CD4-positive, alpha-beta memory T cell (primary cell): ENCODE measurements at regions of chr7 and their contacts with region 1.

Region 1: GRCh38 chr7:44633254-44634186 is 27.1 kb downstream of the OGDH start:
- DNase-seq: peak; percentile 76 to 93 (median 85)
- H3K4me3 ChIP-seq: peak overlapping the region in 1 of 2 donors; percentile 30
- H3K4me3 Mint-ChIP-seq: peak overlapping the region; percentile 21 to 88 (median 75)
- H3K27ac ChIP-seq: peak overlapping the region; percentile 96
- H3K27ac Mint-ChIP-seq: peak overlapping the region; percentile 97 to 100 (median 100)
- H3K4me1 ChIP-seq: peaks cover 100% of the 10 kb centered on the region
- H3K4me1 Mint-ChIP-seq: peaks cover 66 to 98% (median 88%) of the 10 kb centered on the region in 4 donors
- H3K27me3 ChIP-seq: no peaks in the 10 kb centered on the region
- H3K27me3 Mint-ChIP-seq: no peaks in the 10 kb centered on the region

Region 2: GRCh38 chr7:44573464-44574286 is 59.8 kb before region 1 on chr7 and contains the start of gene DDX56:
- CTCF ChIA-PET with region 1: interaction called, 4 read pairs
- POLR2A ChIA-PET with region 1: interaction called, 24 read pairs
- intact Hi-C with region 1: no loop called
- DNase-seq: peak; percentile 87 to 93 (median 88)
- H3K4me3 ChIP-seq: peak within 1 kb of the TSS; percentile 93
- H3K4me3 Mint-ChIP-seq: peak within 1 kb of the TSS; percentile 94 to 99 (median 96)
- H3K27ac ChIP-seq: peak within 1 kb of the TSS; percentile 94
- H3K27ac Mint-ChIP-seq: peak within 1 kb of the TSS; percentile 97 to 99 (median 99)
- H3K4me1 ChIP-seq: peaks cover 30% of the 10 kb centered on the region
- H3K4me1 Mint-ChIP-seq: peaks cover 26 to 41% (median 34%) of the 10 kb centered on the region in 4 donors
- H3K27me3 ChIP-seq: no peaks in the 10 kb centered on the region
- H3K27me3 Mint-ChIP-seq: no peaks in the 10 kb centered on the region
- total RNA-seq, gene DDX56: 109 to 114 TPM

Region 3: DNA sequence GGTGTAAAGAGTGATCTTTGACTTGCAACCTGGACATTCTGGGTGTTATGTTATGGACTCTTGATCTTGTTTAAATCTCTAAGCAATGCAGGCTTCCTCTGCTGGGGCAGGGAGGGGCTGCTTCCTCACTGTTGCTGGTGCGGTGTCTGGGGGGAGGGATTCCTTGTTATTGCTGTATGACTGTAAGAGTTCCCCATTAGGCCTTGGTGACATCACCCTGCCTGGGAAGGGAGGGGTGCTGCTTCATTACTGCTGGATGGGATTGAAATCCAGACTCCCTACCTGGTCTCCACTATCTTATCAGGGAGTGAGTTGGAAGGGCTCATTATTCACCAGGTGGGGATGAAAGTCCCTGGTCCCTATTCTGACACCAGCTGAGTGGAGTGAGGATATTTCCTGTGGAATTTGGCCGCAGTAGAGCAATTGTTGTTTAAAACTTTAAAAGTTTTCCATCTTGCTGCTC is 18.3 kb before region 1 on chr7:
- CTCF ChIA-PET with region 1: interaction called, 48 read pairs
- POLR2A ChIA-PET with region 1: interaction called, 1,226 read pairs
- intact Hi-C with region 1: loop called (anchors 1 kb)
- DNase-seq: peak in 3 of 5 donors; percentile 38 to 72 (median 44)
- H3K4me3 ChIP-seq: no peak overlapping the region
- H3K4me3 Mint-ChIP-seq: peak overlapping the region; percentile 63 to 86 (median 72)
- H3K27ac ChIP-seq: peak overlapping the region; percentile 48
- H3K27ac Mint-ChIP-seq: peak overlapping the region; percentile 75 to 95 (median 93)
- H3K4me1 ChIP-seq: peaks cover 70% of the 10 kb centered on the region
- H3K4me1 Mint-ChIP-seq: peaks cover 52 to 79% (median 64%) of the 10 kb centered on the region in 4 donors
- H3K27me3 ChIP-seq: no peaks in the 10 kb centered on the region
- H3K27me3 Mint-ChIP-seq: no peaks in the 10 kb centered on the region

Region 4: GRCh38 chr7:44622307-44623151 is 11.0 kb before region 1 on chr7:
- CTCF ChIA-PET with region 1: interaction called, 44 read pairs
- POLR2A ChIA-PET with region 1: interaction called, 1,226 read pairs
- intact Hi-C with region 1: loop called (anchors 1 kb)
- DNase-seq: peak in 3 of 5 donors; percentile 35 to 60 (median 36)
- H3K4me3 ChIP-seq: peak overlapping the region in 1 of 2 donors; percentile 58
- H3K4me3 Mint-ChIP-seq: peak overlapping the region; percentile 57 to 95 (median 82)
- H3K27ac ChIP-seq: peak overlapping the region; percentile 74
- H3K27ac Mint-ChIP-seq: peak overlapping the region; percentile 91 to 99 (median 96)
- H3K4me1 ChIP-seq: peaks cover 98% of the 10 kb centered on the region
- H3K4me1 Mint-ChIP-seq: peaks cover 72 to 97% (median 86%) of the 10 kb centered on the region in 4 donors
- H3K27me3 ChIP-seq: no peaks in the 10 kb centered on the region
- H3K27me3 Mint-ChIP-seq: no peaks in the 10 kb centered on the region

Region 5: DNA sequence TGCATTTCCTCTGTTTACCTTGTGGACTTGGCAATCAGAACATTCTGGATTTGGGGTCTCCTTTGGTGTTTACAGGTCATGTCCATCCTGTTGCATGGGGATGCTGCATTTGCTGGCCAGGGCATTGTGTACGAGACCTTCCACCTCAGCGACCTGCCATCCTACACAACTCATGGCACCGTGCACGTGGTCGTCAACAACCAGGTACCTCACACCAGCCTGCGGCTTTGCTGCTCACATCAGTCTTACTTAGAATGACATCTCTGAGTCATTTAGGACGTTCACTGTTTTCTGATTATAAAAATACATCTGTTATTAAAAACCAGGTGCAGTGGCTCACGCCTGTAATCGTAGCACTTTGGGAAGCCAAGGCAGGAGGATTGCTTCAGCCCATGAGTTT is 48.1 kb after region 1 on chr7:
- CTCF ChIA-PET with region 1: no interaction called
- POLR2A ChIA-PET with region 1: interaction called, 4 read pairs
- intact Hi-C with region 1: loop called (anchors 5 kb)
- DNase-seq: no peak
- H3K4me3 ChIP-seq: no peak overlapping the region
- H3K4me3 Mint-ChIP-seq: no peak overlapping the region
- H3K27ac ChIP-seq: no peak overlapping the region
- H3K27ac Mint-ChIP-seq: peak overlapping the region in 2 of 7 donors; percentile 62 to 70
- H3K4me1 ChIP-seq: no peaks in the 10 kb centered on the region
- H3K4me1 Mint-ChIP-seq: peaks cover 0 to 6% (median 5%) of the 10 kb centered on the region in 4 donors
- H3K27me3 ChIP-seq: no peaks in the 10 kb centered on the region
- H3K27me3 Mint-ChIP-seq: no peaks in the 10 kb centered on the region

Region 6: DNA sequence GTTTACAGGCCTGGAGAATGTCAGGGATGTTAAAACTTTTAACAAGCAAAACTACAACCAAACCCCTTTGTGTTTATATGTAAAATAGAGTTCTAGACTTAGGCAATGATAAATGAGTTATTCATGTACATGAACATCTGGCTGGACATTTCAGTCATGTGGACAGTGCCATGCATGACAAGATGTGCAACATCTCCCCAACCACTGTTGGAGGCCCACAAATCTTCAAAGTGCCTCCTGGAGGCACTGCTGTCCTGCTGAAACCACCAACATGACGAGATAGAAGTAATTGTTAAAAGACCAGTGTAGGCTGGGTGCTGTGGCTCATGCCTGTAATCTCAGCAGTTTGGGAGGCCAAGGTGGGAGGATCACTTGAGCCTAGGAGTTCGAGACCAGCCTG is 181.4 kb after region 1 on chr7:
- CTCF ChIA-PET with region 1: no interaction called
- POLR2A ChIA-PET with region 1: no interaction called
- intact Hi-C with region 1: no loop called
- DNase-seq: no peak
- H3K4me3 ChIP-seq: no peak overlapping the region
- H3K4me3 Mint-ChIP-seq: no peak overlapping the region
- H3K27ac ChIP-seq: no peak overlapping the region
- H3K27ac Mint-ChIP-seq: peak overlapping the region in 1 of 7 donors; percentile 41
- H3K4me1 ChIP-seq: no peaks in the 10 kb centered on the region
- H3K4me1 Mint-ChIP-seq: no peaks in the 10 kb centered on the region
- H3K27me3 ChIP-seq: no peaks in the 10 kb centered on the region
- H3K27me3 Mint-ChIP-seq: no peaks in the 10 kb centered on the region